AG04450 (cell line): ENCODE measurements at regions of chrX and their contacts with region 1.

Region 1: DNA sequence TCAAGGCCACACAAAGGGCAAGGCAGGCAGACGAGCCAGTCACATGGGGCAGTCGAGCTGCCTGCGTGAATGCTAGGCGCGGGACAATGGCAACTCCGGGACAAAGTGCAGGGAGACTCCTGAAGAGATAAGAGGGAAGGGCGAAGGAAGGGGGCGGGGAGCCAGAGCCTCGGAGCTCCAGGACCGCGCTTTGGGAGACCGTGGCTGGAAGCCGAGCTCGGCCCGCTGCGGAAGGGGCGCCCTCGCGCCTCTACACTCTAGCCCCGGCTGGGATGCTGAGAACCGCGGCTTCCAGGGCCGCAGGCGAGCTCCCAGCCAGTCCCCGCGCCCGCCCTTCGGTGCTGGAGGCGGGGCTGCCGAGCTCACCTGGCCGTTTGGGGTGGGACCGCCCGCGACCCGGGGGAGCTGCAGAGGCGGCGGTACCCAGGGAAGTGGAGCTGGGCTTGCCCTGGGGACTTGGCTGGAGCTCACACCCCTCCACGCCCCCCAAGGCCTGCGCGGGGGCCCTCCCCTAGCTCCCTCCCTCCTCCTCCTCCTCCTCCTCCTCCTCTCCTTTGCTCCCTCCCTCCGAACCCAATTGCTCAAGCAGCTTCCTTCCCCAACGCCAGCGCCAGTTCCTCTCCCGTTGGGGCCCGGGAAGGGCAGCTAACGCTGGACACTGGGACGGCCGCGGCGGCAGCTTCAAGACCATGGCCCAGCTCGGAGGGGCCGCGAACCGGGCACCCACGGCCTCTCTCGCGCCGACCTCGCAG is at the start of gene SOWAHD:
- DNase-seq: no peak
- H3K4me3 ChIP-seq: peak within 1 kb of the TSS; percentile 42
- H3K27ac ChIP-seq: no peak within 1 kb of the TSS
- H3K27me3 ChIP-seq: peaks cover 2% of the 10 kb centered on the region
- CTCF ChIP-seq: no peak
- polyA plus RNA-seq, gene SOWAHD: 0.25 and 0.31 TPM in 2 replicates

Region 2: GRCh38 chrX:119574394-119575266 is 183.5 kb before region 1 on chrX and contains the start of gene UBE2A:
- CTCF ChIA-PET with region 1: no interaction called
- POLR2A ChIA-PET with region 1: interaction called, 16 read pairs
- DNase-seq: peak; percentile 81
- H3K4me3 ChIP-seq: peak within 1 kb of the TSS; percentile 65
- H3K27ac ChIP-seq: peak within 1 kb of the TSS; percentile 77
- H3K27me3 ChIP-seq: no peaks in the 10 kb centered on the region
- CTCF ChIP-seq: peak; percentile 41
- polyA plus RNA-seq, gene UBE2A: 54.2 and 66.5 TPM in 2 replicates

Region 3: DNA sequence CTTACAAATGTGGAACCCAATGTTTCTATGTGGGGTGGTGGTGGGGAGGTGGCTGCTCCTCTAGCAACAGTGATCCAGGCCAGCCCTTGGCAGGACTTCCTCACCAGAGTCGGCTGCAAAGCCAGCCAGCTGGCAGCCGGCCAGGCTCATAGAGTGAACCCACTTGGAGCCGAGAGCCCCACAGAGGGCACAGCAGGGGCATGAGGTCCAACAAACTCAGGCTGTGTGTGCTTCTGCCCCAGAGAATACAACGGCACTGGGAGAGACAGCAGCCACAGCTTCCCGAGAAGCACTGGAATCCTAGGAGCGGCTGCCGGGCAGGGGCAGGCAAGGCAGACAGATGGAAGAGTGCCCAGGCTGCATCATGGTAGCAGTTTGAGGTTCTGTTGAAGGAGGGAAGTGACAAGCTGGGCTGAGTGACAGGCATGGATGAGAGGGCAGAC is 23.2 kb before region 1 on chrX:
- CTCF ChIA-PET with region 1: interaction called, 9 read pairs
- POLR2A ChIA-PET with region 1: interaction called, 11 read pairs
- DNase-seq: no peak
- H3K4me3 ChIP-seq: no peak overlapping the region
- H3K27ac ChIP-seq: no peak overlapping the region
- H3K27me3 ChIP-seq: peaks cover 3% of the 10 kb centered on the region
- CTCF ChIP-seq: no peak